ENCODE measurements at regions of chr6 and their contacts with region 1.

Region 1: GRCh38 chr6:6494677-6495076 is 93.8 kb upstream of the LY86 start:
- DNase-seq: peak; percentile 62
- ATAC-seq: peak; percentile 41 to 72

Region 2: DNA sequence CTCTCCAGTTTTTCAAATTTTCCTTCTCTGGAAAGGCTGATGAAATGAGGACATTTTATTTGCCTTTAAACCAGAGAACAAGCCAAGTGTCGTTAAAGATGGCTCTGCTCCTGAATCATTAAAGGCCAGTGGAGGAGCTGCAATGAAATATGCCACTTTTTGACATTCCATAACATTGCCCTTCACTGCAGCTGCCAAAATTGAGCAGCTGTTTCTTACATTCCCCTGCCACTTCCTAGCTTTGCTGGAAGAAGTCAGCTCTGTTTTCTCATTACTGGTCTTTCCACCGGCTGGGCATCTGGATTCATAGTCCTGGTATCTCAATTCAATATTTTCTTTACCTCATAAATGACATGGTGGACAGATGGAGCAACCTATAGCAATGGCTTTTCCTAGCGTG is 442.5 kb before region 1 on chr6:
- intact Hi-C with region 1: loop called (anchors 2 to 5 kb)
- DNase-seq: no peak
- ATAC-seq: no peak

Measured in left cardiac atrium (tissue), 4 donors.